Right ventricle myocardium inferior (tissue), 1 donor: ENCODE measurements at regions of chr7 and their contacts with region 1.

Region 1: GRCh38 chr7:38107486-38107893 is 70.6 kb upstream of the STARD3NL start:
- DNase-seq: peak; percentile 65
- ATAC-seq: peak; percentile 67

Region 2: GRCh38 chr7:37901236-37901827 is 206.2 kb before region 1 on chr7:
- intact Hi-C with region 1: loop called (anchors 2 kb)
- DNase-seq: no peak
- ATAC-seq: peak; percentile 50

Region 3: DNA sequence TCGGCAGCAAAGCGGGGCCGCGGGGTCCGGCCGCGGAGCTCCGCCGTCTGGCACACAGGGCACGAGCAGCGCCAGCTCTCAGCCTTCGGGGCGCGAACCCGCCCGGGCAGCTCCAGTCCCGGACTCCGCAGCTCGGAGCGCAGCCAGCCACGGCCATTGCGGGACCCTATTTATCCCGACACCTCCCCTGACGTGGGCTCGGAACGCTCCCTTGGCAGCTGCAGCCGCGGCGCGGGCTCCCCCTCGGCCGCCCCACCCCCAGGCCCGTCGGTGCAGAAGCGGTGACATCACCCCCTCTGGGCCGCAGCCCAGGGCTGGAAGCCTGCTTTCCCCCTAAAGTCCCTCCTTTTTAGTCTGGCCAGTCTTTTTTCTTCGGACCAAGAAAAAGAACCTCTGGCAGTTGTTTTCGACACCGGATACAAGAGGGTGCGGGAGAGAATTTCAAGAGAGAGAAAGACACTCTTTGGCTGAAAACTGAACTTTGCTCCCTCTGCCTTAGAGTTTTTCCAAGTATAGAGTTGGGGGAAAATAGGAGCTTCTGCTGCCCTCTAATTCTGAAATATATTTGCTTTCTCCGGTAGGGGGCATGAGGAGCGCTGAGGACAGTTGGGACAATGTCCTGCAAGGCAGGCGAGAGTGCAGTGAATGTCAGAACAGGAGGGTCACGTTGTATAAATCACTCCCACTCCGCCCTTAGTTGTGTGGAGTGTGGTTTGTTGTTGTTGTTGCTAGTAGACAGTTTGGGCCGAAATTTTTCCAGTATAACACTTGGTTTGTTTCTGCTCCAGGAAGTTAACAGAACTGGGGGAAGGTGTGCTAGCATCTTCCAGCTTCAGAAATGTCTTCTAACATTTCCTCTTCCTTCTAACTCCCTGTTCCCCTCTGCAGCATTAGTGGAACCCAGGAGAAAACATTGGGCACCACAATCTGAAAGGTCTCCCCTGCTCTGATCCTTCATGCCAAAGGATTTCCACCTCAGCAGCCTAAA is 190.5 kb before region 1 on chr7 and contains the start of gene SFRP4:
- intact Hi-C with region 1: loop called (anchors 5 kb)
- DNase-seq: peak; percentile 68
- ATAC-seq: peak; percentile 64
- total RNA-seq, gene SFRP4: 0.32 TPM

Region 4: DNA sequence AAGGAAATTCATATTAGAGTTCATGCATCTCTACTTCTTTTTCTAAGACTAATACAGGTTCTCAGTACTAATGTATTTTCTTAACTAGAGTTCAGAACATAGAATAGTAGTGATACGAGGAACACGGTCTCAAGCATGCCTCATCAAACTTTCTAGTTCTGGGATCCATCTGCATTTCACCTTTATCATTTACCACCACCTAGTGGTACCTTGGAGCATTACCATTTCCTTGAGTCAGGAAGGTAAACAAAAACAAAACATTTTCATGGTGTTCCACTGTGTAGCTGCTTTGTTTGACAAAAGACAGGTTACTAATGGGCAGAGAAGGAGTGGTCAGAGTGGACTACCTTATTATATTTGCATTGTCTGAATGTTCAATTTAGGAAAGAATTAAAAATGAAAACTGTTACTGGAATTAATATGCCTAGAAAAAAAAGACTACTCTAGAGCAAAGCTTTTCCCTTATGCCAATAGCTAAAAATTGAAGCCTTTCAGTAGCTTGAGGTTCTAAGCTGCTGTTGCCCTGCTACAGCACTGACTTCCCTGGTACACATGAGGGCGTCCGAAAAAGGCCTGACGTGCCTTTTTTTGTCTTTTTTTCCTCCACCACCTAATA is 115.1 kb after region 1 on chr7:
- intact Hi-C with region 1: loop called (anchors 1 kb)
- DNase-seq: no peak
- ATAC-seq: peak; percentile 69

Region 5: GRCh38 chr7:38318803-38319416 is 211.4 kb after region 1 on chr7:
- intact Hi-C with region 1: loop called (anchors 5 kb)
- DNase-seq: no peak
- ATAC-seq: peak; percentile 46

Region 6: GRCh38 chr7:38369816-38370493 is 262.5 kb after region 1 on chr7:
- intact Hi-C with region 1: loop called (anchors 5 kb)
- DNase-seq: peak; percentile 93
- ATAC-seq: peak; percentile 91

Region 7: GRCh38 chr7:38975944-38976392 is 868.5 kb after region 1 on chr7:
- intact Hi-C with region 1: no loop called
- DNase-seq: peak; percentile 50
- ATAC-seq: no peak